T-cell (primary cell): ENCODE measurements at regions of chr2 and their contacts with region 1.

Region 1: DNA sequence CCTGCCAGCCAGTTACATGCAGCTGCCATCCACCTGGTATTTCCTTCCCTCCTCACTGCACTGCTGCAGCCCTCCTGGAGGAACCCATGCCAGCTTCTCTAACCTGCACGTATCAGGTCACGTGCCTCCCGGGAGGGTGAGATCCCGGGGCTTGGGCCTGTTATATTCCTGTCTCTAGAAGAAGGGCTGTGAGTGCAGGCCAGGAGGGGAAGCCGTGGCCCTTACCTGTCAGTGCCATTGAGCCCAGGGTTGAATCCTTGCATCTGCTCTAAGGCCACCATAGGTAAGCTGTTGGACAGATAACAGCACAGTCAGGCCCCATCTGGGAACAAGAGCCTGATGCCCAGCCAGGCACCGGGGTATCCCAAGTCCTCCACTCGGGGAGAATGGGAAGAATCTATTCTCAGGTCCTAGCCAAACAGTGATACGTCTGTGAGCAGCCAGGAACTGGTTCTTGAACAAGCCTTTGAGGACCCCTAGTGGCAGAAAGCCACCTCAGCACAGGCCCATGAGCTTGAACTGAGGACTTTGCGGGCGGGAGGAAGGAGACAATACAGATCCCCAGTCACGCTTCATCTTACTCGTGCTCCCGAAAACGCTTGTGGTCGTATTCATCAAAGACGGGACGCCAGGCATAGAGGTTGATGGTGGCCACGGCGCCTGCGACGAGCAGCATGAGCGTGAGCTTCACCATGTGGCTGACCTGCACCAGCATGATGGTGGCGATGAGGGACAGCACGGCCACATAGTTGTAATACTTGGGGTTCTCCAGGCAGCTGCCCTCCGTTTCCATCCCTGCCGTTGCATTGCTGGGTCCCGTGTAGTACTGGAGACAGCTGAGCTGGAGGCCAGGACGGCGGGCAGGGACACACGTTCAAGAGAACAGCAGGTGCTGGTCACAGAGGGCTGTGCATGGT is 34.4 kb downstream of the CENPO start:
- DNase-seq: peak; percentile 38 to 87 (median 66)
- ATAC-seq: peak; percentile 85 to 94 (median 92)
- H3K4me3 ChIP-seq: no peak overlapping the region
- H3K4me3 Mint-ChIP-seq: no peak overlapping the region
- H3K27ac ChIP-seq: no peak overlapping the region
- H3K27ac Mint-ChIP-seq: no peak overlapping the region
- H3K4me1 ChIP-seq: peaks cover 0 to 20% of the 10 kb centered on the region in 2 experiments
- H3K4me1 Mint-ChIP-seq: peaks cover 0 to 22% (median 4%) of the 10 kb centered on the region in 3 donors
- H3K27me3 ChIP-seq: no peaks in the 10 kb centered on the region
- H3K27me3 Mint-ChIP-seq: no peaks in the 10 kb centered on the region

Region 2: GRCh38 chr2:24409700-24410556 is 417.7 kb before region 1 on chr2:
- CTCF ChIA-PET with region 1: interaction called, 22 to 44 read pairs
- POLR2A ChIA-PET with region 1: no interaction called
- DNase-seq: peak in 22 of 35 experiments; percentile 6 to 79 (median 18)
- ATAC-seq: peak; percentile 50 to 60 (median 55)
- H3K4me3 ChIP-seq: no peak overlapping the region
- H3K4me3 Mint-ChIP-seq: no peak overlapping the region
- H3K27ac ChIP-seq: no peak overlapping the region
- H3K27ac Mint-ChIP-seq: no peak overlapping the region
- H3K4me1 ChIP-seq: no peaks in the 10 kb centered on the region
- H3K4me1 Mint-ChIP-seq: no peaks in the 10 kb centered on the region
- H3K27me3 ChIP-seq: peaks cover 0 to 4% of the 10 kb centered on the region in 2 experiments
- H3K27me3 Mint-ChIP-seq: peaks cover 9 to 12% of the 10 kb centered on the region in 2 donors

Region 3: GRCh38 chr2:24421668-24422067 is 405.9 kb before region 1 on chr2:
- CTCF ChIA-PET with region 1: interaction called, 6 to 15 read pairs
- POLR2A ChIA-PET with region 1: no interaction called
- DNase-seq: peak in 31 of 35 experiments; percentile 6 to 68 (median 39)
- ATAC-seq: peak in 2 of 4 experiments; percentile 30 to 44
- H3K4me3 ChIP-seq: no peak overlapping the region
- H3K4me3 Mint-ChIP-seq: no peak overlapping the region
- H3K27ac ChIP-seq: no peak overlapping the region
- H3K27ac Mint-ChIP-seq: no peak overlapping the region
- H3K4me1 ChIP-seq: no peaks in the 10 kb centered on the region
- H3K4me1 Mint-ChIP-seq: no peaks in the 10 kb centered on the region
- H3K27me3 ChIP-seq: no peaks in the 10 kb centered on the region
- H3K27me3 Mint-ChIP-seq: no peaks in the 10 kb centered on the region

Region 4: GRCh38 chr2:24886691-24887304 is 59.2 kb after region 1 on chr2:
- CTCF ChIA-PET with region 1: no interaction called
- POLR2A ChIA-PET with region 1: no interaction called
- DNase-seq: peak in 1 of 35 experiments; percentile 6
- ATAC-seq: no peak
- H3K4me3 ChIP-seq: no peak overlapping the region
- H3K4me3 Mint-ChIP-seq: peak overlapping the region in 1 of 3 donors; percentile 41
- H3K27ac ChIP-seq: no peak overlapping the region
- H3K27ac Mint-ChIP-seq: no peak overlapping the region
- H3K4me1 ChIP-seq: no peaks in the 10 kb centered on the region
- H3K4me1 Mint-ChIP-seq: peaks cover 18 to 24% (median 23%) of the 10 kb centered on the region in 3 donors
- H3K27me3 ChIP-seq: no peaks in the 10 kb centered on the region
- H3K27me3 Mint-ChIP-seq: no peaks in the 10 kb centered on the region